ENCODE measurements at regions of chr3 and their contacts with region 1.

Region 1: DNA sequence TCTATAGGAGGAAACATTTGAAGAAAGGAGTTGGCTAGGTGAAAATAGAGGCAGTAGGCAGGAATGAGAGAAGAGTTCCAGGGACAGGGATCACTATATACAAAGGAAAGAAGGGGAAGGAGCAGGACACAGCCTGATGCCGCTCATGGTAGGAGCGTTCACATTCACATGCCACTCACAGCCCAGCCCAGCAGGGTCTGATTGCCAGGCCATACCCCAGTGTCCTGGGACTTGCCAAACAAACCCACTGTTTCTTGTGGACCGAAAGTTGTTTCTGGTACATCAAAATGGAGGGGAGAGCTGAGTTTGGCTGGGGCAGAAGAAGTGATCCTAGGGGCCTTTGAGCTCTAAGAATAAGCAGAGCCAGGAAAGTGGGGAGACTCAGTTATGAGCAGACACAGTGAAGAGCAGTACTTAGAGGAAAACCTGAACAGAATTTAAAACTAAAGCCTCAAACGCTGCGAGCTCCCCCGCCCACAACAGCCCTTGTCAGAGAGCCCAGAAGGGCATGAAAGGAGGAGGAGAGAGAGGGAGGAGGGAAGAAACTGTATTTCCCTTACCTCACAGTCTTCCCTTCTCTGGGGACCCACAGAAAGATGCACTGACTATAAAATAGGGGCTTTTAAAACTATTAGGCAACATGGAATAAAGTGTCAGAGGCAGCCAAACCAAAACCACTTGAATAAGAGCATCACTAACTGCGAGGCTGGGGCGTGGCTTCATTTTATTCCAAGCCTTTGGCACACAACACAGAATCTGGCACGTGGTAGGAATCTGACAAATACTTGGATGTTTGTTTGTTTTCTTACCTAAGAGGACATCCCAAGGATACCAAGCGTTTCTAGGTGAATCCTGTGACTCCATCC is 129.0 kb downstream of the RPL22L1 start:
- DNase-seq: peak; percentile 93
- ATAC-seq: peak; percentile 46
- H3K4me3 ChIP-seq: peak overlapping the region; percentile 23; the same call in 1 of the 2 replicates
- H3K27ac ChIP-seq: peak overlapping the region; percentile 90
- H3K4me1 ChIP-seq: peaks cover 70% of the 10 kb centered on the region
- H3K27me3 ChIP-seq: no peaks in the 10 kb centered on the region
- CTCF ChIP-seq: no peak

Region 2: DNA sequence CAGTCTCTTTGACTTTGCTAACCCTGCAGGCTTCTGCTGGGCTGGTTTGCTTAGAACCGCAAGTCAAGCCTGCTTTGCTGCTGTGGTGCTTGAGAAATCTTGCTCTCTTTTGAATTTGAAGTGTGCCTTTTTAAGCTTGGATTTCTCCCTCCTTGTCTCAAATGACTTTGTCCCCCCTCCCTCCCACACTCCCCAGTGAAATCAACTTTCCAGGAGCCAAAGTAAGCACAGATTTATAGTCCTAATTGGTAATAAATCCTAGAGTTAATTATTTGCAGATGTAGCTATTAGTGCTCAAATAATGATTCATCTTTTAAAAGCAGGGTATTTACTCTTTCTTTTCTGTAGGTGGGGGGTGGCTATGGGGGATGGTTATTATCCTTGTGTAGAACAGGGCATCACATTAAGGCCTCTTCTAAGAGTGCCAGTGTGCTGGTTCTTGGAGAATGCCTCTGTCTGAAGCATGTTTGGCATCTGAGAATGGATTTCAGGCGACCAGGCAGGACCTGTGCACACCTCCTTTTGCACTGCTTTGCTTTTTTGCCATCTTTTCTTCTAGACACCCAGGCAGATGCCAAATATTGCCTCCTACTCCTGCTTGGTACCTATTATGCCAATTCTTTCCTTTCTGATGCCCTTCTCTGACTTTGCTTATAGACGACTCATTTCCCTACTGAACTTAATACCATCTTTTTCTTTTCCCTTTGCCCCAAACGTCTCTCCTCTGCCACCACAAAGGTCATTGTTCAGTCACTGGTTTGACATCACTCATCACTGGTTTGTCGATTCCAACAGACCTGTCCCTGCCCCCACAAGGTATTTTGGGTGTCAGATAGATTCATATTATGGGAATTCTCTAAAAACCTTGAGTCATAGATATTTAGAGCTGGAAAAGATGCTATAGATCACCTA is 271.6 kb before region 1 on chr3:
- CTCF ChIA-PET with region 1: no interaction called
- POLR2A ChIA-PET with region 1: no interaction called
- intact Hi-C with region 1: loop called (anchors 5 kb)
- DNase-seq: peak; percentile 68
- ATAC-seq: peak; percentile 72
- H3K4me3 ChIP-seq: no peak overlapping the region; the same call in 1 of the 2 replicates
- H3K27ac ChIP-seq: peak overlapping the region; percentile 21
- H3K4me1 ChIP-seq: peaks cover 56% of the 10 kb centered on the region
- H3K27me3 ChIP-seq: no peaks in the 10 kb centered on the region
- CTCF ChIP-seq: no peak

Region 3: GRCh38 chr3:170584585-170585007 is 156.4 kb before region 1 on chr3:
- CTCF ChIA-PET with region 1: no interaction called
- POLR2A ChIA-PET with region 1: no interaction called
- intact Hi-C with region 1: no loop called
- DNase-seq: peak; percentile 53
- ATAC-seq: peak; percentile 56; the same call in 1 of the 2 replicates
- H3K4me3 ChIP-seq: no peak overlapping the region
- H3K27ac ChIP-seq: no peak overlapping the region
- H3K4me1 ChIP-seq: no peaks in the 10 kb centered on the region
- H3K27me3 ChIP-seq: no peaks in the 10 kb centered on the region
- CTCF ChIP-seq: no peak

Region 4: DNA sequence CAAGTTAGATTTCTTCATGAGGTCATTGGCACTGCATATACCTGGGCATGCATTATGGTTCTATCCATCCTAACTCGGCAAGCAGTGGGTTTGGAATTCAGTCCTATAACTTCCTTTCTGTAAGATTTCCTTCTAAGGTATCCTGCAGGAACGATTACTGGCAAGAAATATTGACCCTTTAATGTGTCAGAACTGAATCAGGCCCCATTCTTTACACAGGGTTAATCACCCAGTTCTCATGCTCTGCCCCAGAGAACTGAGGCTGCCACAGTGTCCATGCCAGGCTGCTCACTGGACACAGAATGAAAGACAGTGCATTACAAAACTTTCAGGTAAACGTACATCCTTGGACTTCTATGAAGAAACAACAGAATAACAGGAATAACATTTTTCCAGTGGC is 20.1 kb after region 1 on chr3:
- CTCF ChIA-PET with region 1: no interaction called
- POLR2A ChIA-PET with region 1: interaction called, 3 read pairs
- intact Hi-C with region 1: loop called (anchors 1 kb)
- DNase-seq: peak; percentile 92
- ATAC-seq: peak; percentile 84
- H3K4me3 ChIP-seq: no peak overlapping the region
- H3K27ac ChIP-seq: peak overlapping the region; percentile 66
- H3K4me1 ChIP-seq: peaks cover 38% of the 10 kb centered on the region
- H3K27me3 ChIP-seq: no peaks in the 10 kb centered on the region
- CTCF ChIP-seq: no peak

Region 5: GRCh38 chr3:170802164-170803151 is 61.5 kb after region 1 on chr3:
- CTCF ChIA-PET with region 1: no interaction called
- POLR2A ChIA-PET with region 1: interaction called, 3 read pairs
- intact Hi-C with region 1: loop called (anchors 1 kb)
- DNase-seq: peak; percentile 80
- ATAC-seq: peak; percentile 88
- H3K4me3 ChIP-seq: no peak overlapping the region
- H3K27ac ChIP-seq: peak overlapping the region; percentile 75
- H3K4me1 ChIP-seq: peaks cover 33% of the 10 kb centered on the region
- H3K27me3 ChIP-seq: no peaks in the 10 kb centered on the region
- CTCF ChIP-seq: no peak